ENCODE measurements at regions of chr2 and their contacts with region 1.

Region 1: GRCh38 chr2:181123798-181124231 is 143.4 kb downstream of the UBE2E3 start:
- DNase-seq: peak; percentile 30 to 88 (median 85)
- H3K4me3 ChIP-seq: peak overlapping the region; percentile 56
- H3K4me3 Mint-ChIP-seq: peak overlapping the region; percentile 70 to 89 (median 83)
- H3K27ac ChIP-seq: peak overlapping the region; percentile 91
- H3K27ac Mint-ChIP-seq: peak overlapping the region; percentile 94 to 100 (median 98)
- H3K4me1 ChIP-seq: peaks cover 61% of the 10 kb centered on the region
- H3K4me1 Mint-ChIP-seq: peaks cover 70 to 88% (median 84%) of the 10 kb centered on the region in 3 donors
- H3K27me3 ChIP-seq: no peaks in the 10 kb centered on the region
- H3K27me3 Mint-ChIP-seq: no peaks in the 10 kb centered on the region

Region 2: GRCh38 chr2:181046833-181047232 is 77.0 kb before region 1 on chr2:
- CTCF ChIA-PET with region 1: no interaction called
- POLR2A ChIA-PET with region 1: no interaction called
- DNase-seq: no peak
- H3K4me3 ChIP-seq: no peak overlapping the region
- H3K4me3 Mint-ChIP-seq: no peak overlapping the region
- H3K27ac ChIP-seq: no peak overlapping the region
- H3K27ac Mint-ChIP-seq: no peak overlapping the region
- H3K4me1 ChIP-seq: no peaks in the 10 kb centered on the region
- H3K4me1 Mint-ChIP-seq: peaks cover 5 to 15% (median 11%) of the 10 kb centered on the region in 3 donors
- H3K27me3 ChIP-seq: no peaks in the 10 kb centered on the region
- H3K27me3 Mint-ChIP-seq: no peaks in the 10 kb centered on the region

Region 3: GRCh38 chr2:181085734-181086133 is 38.1 kb before region 1 on chr2:
- CTCF ChIA-PET with region 1: no interaction called
- POLR2A ChIA-PET with region 1: no interaction called
- DNase-seq: no peak
- H3K4me3 ChIP-seq: no peak overlapping the region
- H3K4me3 Mint-ChIP-seq: no peak overlapping the region
- H3K27ac ChIP-seq: no peak overlapping the region
- H3K27ac Mint-ChIP-seq: peak overlapping the region in 1 of 8 donors; percentile 29
- H3K4me1 ChIP-seq: no peaks in the 10 kb centered on the region
- H3K4me1 Mint-ChIP-seq: peaks cover 0 to 2% (median 0%) of the 10 kb centered on the region in 3 donors
- H3K27me3 ChIP-seq: no peaks in the 10 kb centered on the region
- H3K27me3 Mint-ChIP-seq: peaks cover 3 to 16% of the 10 kb centered on the region in 2 donors

Region 4: GRCh38 chr2:181140414-181140813 is 16.6 kb after region 1 on chr2:
- CTCF ChIA-PET with region 1: interaction called, 38 read pairs
- POLR2A ChIA-PET with region 1: interaction called, 14 read pairs
- DNase-seq: peak in 1 of 5 donors; percentile 55
- H3K4me3 ChIP-seq: no peak overlapping the region
- H3K4me3 Mint-ChIP-seq: peak overlapping the region; percentile 57 to 89 (median 78)
- H3K27ac ChIP-seq: peak overlapping the region; percentile 36
- H3K27ac Mint-ChIP-seq: peak overlapping the region; percentile 91 to 100 (median 96)
- H3K4me1 ChIP-seq: peaks cover 65% of the 10 kb centered on the region
- H3K4me1 Mint-ChIP-seq: peaks cover 80 to 93% (median 85%) of the 10 kb centered on the region in 3 donors
- H3K27me3 ChIP-seq: no peaks in the 10 kb centered on the region
- H3K27me3 Mint-ChIP-seq: no peaks in the 10 kb centered on the region

Region 5: DNA sequence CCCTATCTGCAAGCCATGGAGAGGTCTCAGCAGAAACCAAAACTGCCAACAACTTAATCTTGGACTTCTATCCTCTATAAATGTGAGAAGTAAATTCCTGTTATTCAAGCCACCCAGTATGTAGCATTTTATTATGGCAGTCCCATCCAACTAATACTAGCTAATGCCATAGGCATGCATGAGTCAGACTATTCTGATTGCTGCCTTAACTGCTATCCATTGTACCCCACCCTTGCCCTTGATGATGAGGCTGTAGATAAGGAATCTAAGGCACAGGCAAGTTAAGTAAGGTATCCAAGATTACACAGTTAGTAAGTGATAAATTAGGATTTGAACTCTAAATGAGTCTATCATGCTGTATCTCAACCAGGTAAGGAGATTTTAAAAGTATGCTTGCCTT is 79.6 kb after region 1 on chr2:
- CTCF ChIA-PET with region 1: no interaction called
- POLR2A ChIA-PET with region 1: no interaction called
- DNase-seq: no peak
- H3K4me3 ChIP-seq: no peak overlapping the region
- H3K4me3 Mint-ChIP-seq: no peak overlapping the region
- H3K27ac ChIP-seq: no peak overlapping the region
- H3K27ac Mint-ChIP-seq: peak overlapping the region in 1 of 8 donors; percentile 21
- H3K4me1 ChIP-seq: peaks cover 14% of the 10 kb centered on the region
- H3K4me1 Mint-ChIP-seq: peaks cover 26 to 49% (median 49%) of the 10 kb centered on the region in 3 donors
- H3K27me3 ChIP-seq: no peaks in the 10 kb centered on the region
- H3K27me3 Mint-ChIP-seq: peaks cover 0 to 1% of the 10 kb centered on the region in 2 donors